Mammary epithelial cell (primary cell): ENCODE measurements at regions of chr3 and their contacts with region 1.

Region 1: DNA sequence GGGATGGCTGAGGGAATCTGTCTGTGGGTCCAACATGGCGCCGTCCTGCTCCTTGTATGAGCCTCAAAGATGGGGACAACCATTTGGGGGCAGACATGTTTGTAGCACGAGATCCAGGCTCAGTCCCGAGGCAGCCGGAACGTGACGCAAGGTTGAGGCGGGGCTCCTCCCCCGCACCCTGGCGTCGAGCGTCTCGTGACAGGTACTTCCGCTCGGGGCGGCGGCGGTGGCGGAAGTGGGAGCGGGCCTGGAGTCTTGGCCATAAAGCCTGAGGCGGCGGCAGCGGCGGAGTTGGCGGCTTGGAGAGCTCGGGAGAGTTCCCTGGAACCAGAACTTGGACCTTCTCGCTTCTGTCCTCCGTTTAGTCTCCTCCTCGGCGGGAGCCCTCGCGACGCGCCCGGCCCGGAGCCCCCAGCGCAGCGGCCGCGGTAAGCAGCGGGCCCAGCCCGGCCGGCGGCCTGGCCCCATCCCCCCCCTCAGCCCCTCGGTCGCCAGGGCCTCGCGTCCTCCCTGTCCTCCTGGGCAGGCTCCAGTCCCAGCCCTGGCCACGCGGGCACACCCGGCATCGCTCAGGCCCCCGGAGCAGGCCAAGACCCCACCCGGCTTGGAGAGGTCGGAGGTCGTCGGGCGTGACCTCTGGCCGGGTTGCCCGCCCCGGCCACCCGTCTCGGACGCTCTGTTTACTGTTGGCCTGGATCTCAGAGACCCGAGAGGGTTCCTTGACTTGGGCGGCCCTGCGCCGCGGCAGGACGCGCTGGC is at the start of gene RAB7A:
- DNase-seq: peak; percentile 97
- H3K4me3 ChIP-seq: peak within 1 kb of the TSS; percentile 80 to 100 (median 85)
- H3K27ac ChIP-seq: peak within 1 kb of the TSS; percentile 98
- H3K4me1 ChIP-seq: peaks cover 15% of the 10 kb centered on the region
- H3K27me3 ChIP-seq: no peaks in the 10 kb centered on the region
- CTCF ChIP-seq: no peak
- total RNA-seq, gene RAB7A: 76.7 to 352 TPM

Region 2: DNA sequence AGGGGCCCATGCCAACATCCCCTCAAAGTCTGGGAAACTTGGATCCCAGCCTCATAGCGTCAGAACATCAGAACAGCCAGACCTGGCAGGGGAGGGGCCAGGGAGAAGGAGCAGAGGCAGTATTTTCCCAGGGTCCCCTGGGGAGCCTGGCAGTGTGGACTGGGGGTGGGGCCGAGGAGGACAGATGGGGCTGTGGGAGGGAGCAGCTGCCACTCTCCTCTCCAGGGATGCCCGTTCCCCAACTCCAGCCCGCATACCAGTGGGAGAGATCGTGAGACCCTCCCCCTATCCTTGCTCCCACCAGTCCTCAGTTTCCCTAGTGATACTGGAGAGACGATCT is 253.0 kb before region 1 on chr3:
- CTCF ChIA-PET with region 1: no interaction called
- dilution Hi-C with region 1: no loop called
- in situ Hi-C with region 1: no loop called
- intact Hi-C with region 1: no loop called
- DNase-seq: no peak
- H3K4me3 ChIP-seq: no peak overlapping the region
- H3K27ac ChIP-seq: no peak overlapping the region
- H3K4me1 ChIP-seq: no peaks in the 10 kb centered on the region
- H3K27me3 ChIP-seq: no peaks in the 10 kb centered on the region
- CTCF ChIP-seq: no peak

Region 3: GRCh38 chr3:128559486-128560225 is 166.5 kb before region 1 on chr3:
- CTCF ChIA-PET with region 1: no interaction called
- dilution Hi-C with region 1: no loop called
- in situ Hi-C with region 1: no loop called
- intact Hi-C with region 1: no loop called
- DNase-seq: no peak
- H3K4me3 ChIP-seq: no peak overlapping the region
- H3K27ac ChIP-seq: no peak overlapping the region
- H3K4me1 ChIP-seq: no peaks in the 10 kb centered on the region
- H3K27me3 ChIP-seq: peaks cover 5% of the 10 kb centered on the region
- CTCF ChIP-seq: no peak

Region 4: DNA sequence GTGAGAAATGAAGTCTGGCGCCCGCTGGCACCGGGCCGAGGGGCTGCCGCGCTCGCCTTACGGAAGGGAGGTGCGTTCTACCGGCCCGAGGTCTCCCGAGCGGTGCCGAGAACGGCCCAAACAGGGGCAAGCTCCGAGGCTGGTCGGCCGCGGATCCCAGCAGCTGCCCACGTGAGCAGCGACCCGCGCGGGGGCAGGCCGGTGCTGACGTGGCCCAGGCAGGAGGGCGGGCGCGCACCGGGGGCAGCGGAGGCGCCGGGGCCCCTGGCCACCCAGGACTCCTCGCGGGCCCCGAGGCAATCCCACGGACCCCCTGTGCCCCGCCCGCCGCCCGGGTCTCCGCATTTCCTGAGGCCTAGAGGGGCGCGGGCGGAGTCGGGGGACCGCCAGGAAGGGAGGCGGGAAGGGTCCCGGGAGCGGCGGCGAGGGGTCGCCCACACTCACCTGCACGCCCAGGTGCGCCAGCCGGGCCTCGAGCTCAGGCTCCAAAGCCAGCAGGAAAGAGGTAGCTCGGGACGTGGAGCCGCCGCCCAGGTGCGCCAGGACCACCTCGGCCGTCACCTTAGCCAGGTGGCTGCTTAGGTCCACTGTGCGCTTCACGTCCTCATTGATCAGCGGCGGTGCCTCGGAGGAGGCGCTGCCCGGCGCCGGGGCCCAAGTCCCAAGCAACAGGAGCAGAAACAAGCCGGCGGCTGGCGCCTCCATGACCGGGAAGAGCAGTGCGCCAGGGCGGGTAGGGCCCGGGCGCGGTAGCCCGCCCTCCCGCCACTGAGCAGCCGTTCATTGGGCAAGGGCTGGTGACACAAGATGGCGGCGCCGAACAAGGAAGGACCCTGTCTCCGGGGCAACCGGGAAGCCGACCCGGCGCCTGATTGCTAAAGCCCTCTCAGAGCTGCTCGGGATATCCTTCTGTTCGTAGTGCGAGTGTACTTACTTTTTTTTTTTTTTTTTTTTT is 75.7 kb before region 1 on chr3 and contains the start of gene RPN1:
- CTCF ChIA-PET with region 1: no interaction called
- dilution Hi-C with region 1: no loop called
- in situ Hi-C with region 1: no loop called
- intact Hi-C with region 1: loop called (anchors 1 kb)
- DNase-seq: peak; percentile 90
- H3K4me3 ChIP-seq: peak within 1 kb of the TSS; percentile 90 to 100 (median 100)
- H3K27ac ChIP-seq: peak within 1 kb of the TSS; percentile 95
- H3K4me1 ChIP-seq: peaks cover 6% of the 10 kb centered on the region
- H3K27me3 ChIP-seq: no peaks in the 10 kb centered on the region
- CTCF ChIP-seq: no peak
- total RNA-seq, gene RPN1: 206 to 305 TPM

Region 5: GRCh38 chr3:128879125-128879969 is 153.2 kb after region 1 on chr3 and contains the start of gene ACAD9:
- CTCF ChIA-PET with region 1: no interaction called
- dilution Hi-C with region 1: no loop called
- in situ Hi-C with region 1: no loop called
- intact Hi-C with region 1: loop called (anchors 2 kb)
- DNase-seq: peak; percentile 97
- H3K4me3 ChIP-seq: peak within 1 kb of the TSS; percentile 82 to 98 (median 94)
- H3K27ac ChIP-seq: peak within 1 kb of the TSS; percentile 97
- H3K4me1 ChIP-seq: peaks cover 21% of the 10 kb centered on the region
- H3K27me3 ChIP-seq: no peaks in the 10 kb centered on the region
- CTCF ChIP-seq: no peak
- total RNA-seq, gene ACAD9: 35.2 to 48.7 TPM